B cell (primary cell): ENCODE measurements at regions of chr15 and their contacts with region 1.

Region 1: GRCh38 chr15:75201609-75202250 is at the start of gene C15orf39:
- DNase-seq: peak; percentile 89
- ATAC-seq: peak; percentile 59
- H3K4me3 ChIP-seq: peak within 1 kb of the TSS; percentile 53 to 77 (median 73)
- H3K4me3 Mint-ChIP-seq: peak within 1 kb of the TSS; percentile 98
- H3K27ac ChIP-seq: peak within 1 kb of the TSS; percentile 59 to 86
- H3K27ac Mint-ChIP-seq: peak within 1 kb of the TSS; percentile 96
- H3K4me1 ChIP-seq: peaks cover 24 to 51% of the 10 kb centered on the region in 2 donors
- H3K4me1 Mint-ChIP-seq: peaks cover 41% of the 10 kb centered on the region
- H3K27me3 ChIP-seq: peaks cover 0 to 19% (median 5%) of the 10 kb centered on the region in 4 experiments
- H3K27me3 Mint-ChIP-seq: no peaks in the 10 kb centered on the region
- CTCF ChIP-seq: peak; percentile 97
- total RNA-seq, gene C15orf39: 72.1 and 72.7 TPM in 2 replicates

Region 2: GRCh38 chr15:74873036-74873755 is 328.5 kb before region 1 on chr15 and contains the start of gene SCAMP2:
- CTCF ChIA-PET with region 1: no interaction called
- POLR2A ChIA-PET with region 1: no interaction called
- intact Hi-C with region 1: loop called (anchors 1 kb)
- DNase-seq: peak; percentile 96
- ATAC-seq: peak; percentile 96
- H3K4me3 ChIP-seq: peak within 1 kb of the TSS; percentile 64 to 91 (median 83)
- H3K4me3 Mint-ChIP-seq: peak within 1 kb of the TSS; percentile 95
- H3K27ac ChIP-seq: peak within 1 kb of the TSS; percentile 94 to 95
- H3K27ac Mint-ChIP-seq: peak within 1 kb of the TSS; percentile 98
- H3K4me1 ChIP-seq: peaks cover 37 to 52% of the 10 kb centered on the region in 2 donors
- H3K4me1 Mint-ChIP-seq: peaks cover 42% of the 10 kb centered on the region
- H3K27me3 ChIP-seq: no peaks in the 10 kb centered on the region
- H3K27me3 Mint-ChIP-seq: no peaks in the 10 kb centered on the region
- CTCF ChIP-seq: no peak
- total RNA-seq, gene SCAMP2: 105 and 111 TPM in 2 replicates

Region 3: GRCh38 chr15:75023181-75023871 is 178.4 kb before region 1 on chr15 and contains the start of gene PPCDC:
- CTCF ChIA-PET with region 1: interaction called, 170 read pairs
- POLR2A ChIA-PET with region 1: interaction called, 5 read pairs
- intact Hi-C with region 1: loop called (anchors 1 kb)
- DNase-seq: peak; percentile 93
- ATAC-seq: peak; percentile 100
- H3K4me3 ChIP-seq: peak within 1 kb of the TSS; percentile 72 to 96 (median 94)
- H3K4me3 Mint-ChIP-seq: peak within 1 kb of the TSS; percentile 97
- H3K27ac ChIP-seq: peak within 1 kb of the TSS; percentile 49 to 72
- H3K27ac Mint-ChIP-seq: peak within 1 kb of the TSS; percentile 94
- H3K4me1 ChIP-seq: peaks cover 5 to 18% of the 10 kb centered on the region in 2 donors
- H3K4me1 Mint-ChIP-seq: peaks cover 14% of the 10 kb centered on the region
- H3K27me3 ChIP-seq: peaks cover 0 to 33% (median 15%) of the 10 kb centered on the region in 4 experiments
- H3K27me3 Mint-ChIP-seq: peaks cover 23% of the 10 kb centered on the region
- CTCF ChIP-seq: no peak
- total RNA-seq, gene PPCDC: 14.8 and 15.1 TPM in 2 replicates

Region 4: GRCh38 chr15:75036314-75036649 is 165.4 kb before region 1 on chr15:
- CTCF ChIA-PET with region 1: interaction called, 251 read pairs
- POLR2A ChIA-PET with region 1: no interaction called
- intact Hi-C with region 1: no loop called
- DNase-seq: no peak
- ATAC-seq: no peak
- H3K4me3 ChIP-seq: no peak overlapping the region
- H3K4me3 Mint-ChIP-seq: no peak overlapping the region
- H3K27ac ChIP-seq: no peak overlapping the region
- H3K27ac Mint-ChIP-seq: no peak overlapping the region
- H3K4me1 ChIP-seq: peaks cover 7 to 13% of the 10 kb centered on the region in 2 donors
- H3K4me1 Mint-ChIP-seq: peaks cover 12% of the 10 kb centered on the region
- H3K27me3 ChIP-seq: peaks cover 0 to 2% (median 0%) of the 10 kb centered on the region in 4 experiments
- H3K27me3 Mint-ChIP-seq: no peaks in the 10 kb centered on the region
- CTCF ChIP-seq: no peak

Region 5: GRCh38 chr15:75130597-75131268 is 71.0 kb before region 1 on chr15:
- CTCF ChIA-PET with region 1: interaction called, 8 read pairs
- POLR2A ChIA-PET with region 1: no interaction called
- intact Hi-C with region 1: loop called (anchors 1 kb)
- DNase-seq: peak; percentile 70
- ATAC-seq: peak; percentile 93
- H3K4me3 ChIP-seq: peak overlapping the region in 4 of 5 experiments; percentile 16 to 51 (median 40)
- H3K4me3 Mint-ChIP-seq: peak overlapping the region; percentile 73
- H3K27ac ChIP-seq: no peak overlapping the region
- H3K27ac Mint-ChIP-seq: peak overlapping the region; percentile 27
- H3K4me1 ChIP-seq: peaks cover 11 to 18% of the 10 kb centered on the region in 2 donors
- H3K4me1 Mint-ChIP-seq: peaks cover 17% of the 10 kb centered on the region
- H3K27me3 ChIP-seq: no peaks in the 10 kb centered on the region
- H3K27me3 Mint-ChIP-seq: no peaks in the 10 kb centered on the region
- CTCF ChIP-seq: no peak

Region 6: DNA sequence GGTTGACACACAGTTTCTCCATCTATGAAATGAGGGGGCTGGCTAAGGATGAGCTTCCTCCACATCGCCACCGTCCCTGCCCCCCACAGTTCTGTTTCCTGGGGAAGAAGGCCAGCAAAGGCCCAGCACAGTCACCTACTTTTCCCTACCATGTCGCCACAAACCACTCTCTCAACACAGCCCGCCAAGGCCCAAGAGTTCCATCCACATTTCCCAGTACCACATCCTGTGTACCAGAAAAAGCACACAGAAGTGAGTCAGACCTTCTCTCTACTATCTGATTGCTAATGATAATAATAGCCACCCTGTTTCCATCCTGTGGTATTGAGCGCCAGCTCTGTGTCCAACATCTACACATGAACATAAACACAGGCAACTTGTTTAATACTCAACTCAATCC is 30.3 kb before region 1 on chr15:
- CTCF ChIA-PET with region 1: no interaction called
- POLR2A ChIA-PET with region 1: no interaction called
- intact Hi-C with region 1: no loop called
- DNase-seq: no peak
- ATAC-seq: no peak
- H3K4me3 ChIP-seq: no peak overlapping the region
- H3K4me3 Mint-ChIP-seq: no peak overlapping the region
- H3K27ac ChIP-seq: no peak overlapping the region
- H3K27ac Mint-ChIP-seq: no peak overlapping the region
- H3K4me1 ChIP-seq: no peaks in the 10 kb centered on the region
- H3K4me1 Mint-ChIP-seq: no peaks in the 10 kb centered on the region
- H3K27me3 ChIP-seq: peaks cover 0 to 4% (median 0%) of the 10 kb centered on the region in 4 experiments
- H3K27me3 Mint-ChIP-seq: peaks cover 12% of the 10 kb centered on the region
- CTCF ChIP-seq: no peak